Activated T-helper 1 cell treated with anti-CD3 and anti-CD28 coated beads, Interleukin-12 subunit alpha, Interleukin-12 subunit beta, Interleukin-2, Interleukin-4 antibody, amounts not matched to agents 30 ng/mL and 10 ng/mL and 1 ng/mL, durations not matched to agents 14 hours and 24 hours and 36 hours (primary cell): ENCODE measurements at regions of chr13 and their contacts with region 1.

Region 1: DNA sequence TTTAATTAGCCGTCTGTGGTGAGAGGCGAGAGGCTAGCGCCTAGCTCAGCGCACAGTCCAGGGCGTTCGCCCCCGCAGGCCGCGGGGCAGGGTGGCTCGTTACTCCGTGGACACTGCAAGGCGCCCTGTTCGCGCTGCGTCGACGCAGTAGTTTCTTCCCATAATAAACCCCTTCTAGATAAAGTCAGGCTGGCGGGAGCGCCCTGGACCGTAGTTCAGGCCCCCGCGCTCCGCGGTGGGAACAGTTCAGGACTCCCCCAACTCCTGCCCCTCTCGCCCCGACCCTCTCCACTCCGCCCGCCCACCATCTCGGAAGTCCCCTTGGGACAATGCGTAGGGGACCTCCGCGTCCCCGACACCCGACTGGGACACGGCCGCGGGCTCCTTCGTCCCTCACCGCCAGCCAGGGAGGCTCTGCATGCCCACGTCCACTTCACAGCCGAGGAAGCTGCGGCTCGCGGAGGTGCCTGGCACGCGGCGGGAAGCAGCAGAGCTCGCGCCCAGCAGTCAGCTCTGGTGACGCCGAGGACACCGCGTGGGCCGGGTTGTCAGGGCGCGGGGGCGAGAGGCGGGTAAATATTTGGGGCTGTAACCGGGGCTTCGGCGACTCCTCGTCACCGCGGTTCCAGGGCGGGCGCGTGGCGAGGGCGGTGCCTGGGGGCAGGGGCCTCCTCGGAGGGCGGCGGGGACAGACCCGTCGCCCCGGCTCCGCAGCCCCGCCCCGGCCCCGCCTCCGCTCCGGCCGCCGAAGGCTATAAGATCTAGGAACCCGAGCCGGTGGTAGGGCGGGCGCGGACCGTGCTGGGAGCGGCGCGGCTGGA is at the start of gene RGCC:
- DNase-seq: peak; percentile 87
- H3K4me3 Mint-ChIP-seq: peak within 1 kb of the TSS; percentile 95
- H3K27ac Mint-ChIP-seq: peak within 1 kb of the TSS; percentile 96
- H3K4me1 Mint-ChIP-seq: peaks cover 44% of the 10 kb centered on the region
- H3K27me3 Mint-ChIP-seq: peaks cover 22% of the 10 kb centered on the region
- total RNA-seq, gene RGCC: 135 and 139 TPM in 2 replicates

Region 2: DNA sequence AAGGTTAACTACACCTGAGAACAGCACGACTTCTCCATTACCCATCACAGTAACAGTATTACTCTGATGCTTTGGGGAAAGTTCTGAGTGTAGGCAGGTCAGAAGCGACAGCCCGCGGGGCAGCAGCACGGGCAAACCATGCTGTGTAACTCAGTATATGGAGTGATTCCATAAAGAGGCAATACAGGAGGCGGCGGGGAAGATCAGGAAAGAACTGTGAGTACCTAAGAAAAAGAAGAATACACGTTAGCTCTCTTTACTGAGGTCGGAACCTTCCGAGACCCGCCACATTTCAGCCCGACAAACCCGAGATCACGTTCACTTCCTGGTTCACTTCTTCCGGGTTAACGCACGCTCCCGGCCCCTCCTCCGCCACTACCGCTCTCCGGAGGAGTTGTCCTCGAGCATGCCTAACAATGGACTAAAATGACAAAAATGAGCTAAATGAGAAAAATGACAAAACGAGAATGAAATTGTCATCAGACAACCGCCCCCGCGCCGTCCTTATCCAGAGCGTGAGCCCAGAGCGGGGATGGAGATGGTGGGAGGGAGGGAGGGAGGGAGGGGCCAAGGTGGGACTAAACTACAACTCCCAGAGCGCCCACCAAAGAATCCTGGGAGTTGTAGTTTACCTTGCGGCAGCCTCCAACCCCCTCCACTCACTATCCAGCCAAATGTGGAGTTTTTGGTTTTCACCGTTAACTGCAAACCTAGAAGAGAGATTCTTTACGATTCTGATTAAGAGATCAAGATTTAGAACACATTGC is 193.5 kb before region 1 on chr13 and contains the start of gene MTRF1:
- intact Hi-C with region 1: loop called (anchors 2 kb)
- DNase-seq: peak; percentile 72
- H3K4me3 Mint-ChIP-seq: peak within 1 kb of the TSS; percentile 95
- H3K27ac Mint-ChIP-seq: peak within 1 kb of the TSS; percentile 100
- H3K4me1 Mint-ChIP-seq: peaks cover 12% of the 10 kb centered on the region
- H3K27me3 Mint-ChIP-seq: no peaks in the 10 kb centered on the region
- total RNA-seq, gene MTRF1: 17.5 and 20.2 TPM in 2 replicates

Region 3: DNA sequence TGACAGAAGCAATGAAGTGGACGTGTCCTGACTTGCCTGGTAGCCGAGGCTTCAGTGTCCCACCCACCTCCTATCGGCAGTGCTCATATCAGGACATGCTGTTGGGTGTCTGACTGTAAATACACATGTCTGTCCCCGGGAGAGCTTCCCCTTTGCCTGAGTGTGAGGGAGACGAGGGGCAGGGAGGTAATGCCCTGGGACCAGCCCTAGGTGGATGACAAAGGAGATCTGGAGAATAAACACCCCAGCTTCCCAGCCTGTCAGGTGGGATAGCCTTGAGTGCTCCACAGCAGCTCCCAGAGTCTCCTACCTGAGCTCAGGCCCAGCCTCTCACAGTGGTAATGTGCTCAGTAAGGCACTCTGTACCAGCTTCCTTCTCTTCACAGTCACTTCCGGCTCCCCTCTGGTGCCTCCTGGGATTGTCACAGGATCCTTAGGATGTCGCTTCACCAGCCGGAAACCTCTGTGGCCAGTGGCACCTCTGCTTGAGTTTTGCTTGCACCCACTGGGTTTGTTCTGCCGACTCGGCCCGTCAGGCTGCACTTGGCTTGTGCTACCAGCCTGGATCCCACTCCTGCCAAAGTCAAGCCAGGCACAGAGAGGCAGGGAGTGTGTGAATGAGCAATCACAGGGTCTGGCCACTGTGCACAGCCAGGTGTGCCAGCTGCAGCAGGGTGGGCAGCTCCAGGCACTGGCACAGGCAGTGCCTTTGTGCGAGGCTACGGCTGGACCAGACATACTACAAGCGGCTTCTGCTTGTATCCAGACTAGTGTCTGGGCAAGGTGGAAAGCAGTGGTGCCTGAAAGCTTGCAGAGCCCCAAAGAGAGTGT is 54.1 kb before region 1 on chr13:
- intact Hi-C with region 1: loop called (anchors 2 kb)
- DNase-seq: no peak
- H3K4me3 Mint-ChIP-seq: no peak overlapping the region
- H3K27ac Mint-ChIP-seq: no peak overlapping the region
- H3K4me1 Mint-ChIP-seq: no peaks in the 10 kb centered on the region
- H3K27me3 Mint-ChIP-seq: no peaks in the 10 kb centered on the region

Region 4: GRCh38 chr13:41502673-41503072 is 45.7 kb after region 1 on chr13:
- intact Hi-C with region 1: loop called (anchors 1 kb)
- DNase-seq: no peak
- H3K4me3 Mint-ChIP-seq: no peak overlapping the region
- H3K27ac Mint-ChIP-seq: no peak overlapping the region
- H3K4me1 Mint-ChIP-seq: peaks cover 58% of the 10 kb centered on the region
- H3K27me3 Mint-ChIP-seq: peaks cover 2% of the 10 kb centered on the region

Region 5: GRCh38 chr13:41652727-41653361 is 195.9 kb after region 1 on chr13:
- intact Hi-C with region 1: loop called (anchors 1 kb)
- DNase-seq: no peak
- H3K4me3 Mint-ChIP-seq: no peak overlapping the region
- H3K27ac Mint-ChIP-seq: no peak overlapping the region
- H3K4me1 Mint-ChIP-seq: peaks cover 13% of the 10 kb centered on the region
- H3K27me3 Mint-ChIP-seq: no peaks in the 10 kb centered on the region

Region 6: GRCh38 chr13:42110410-42111155 is 653.6 kb after region 1 on chr13:
- intact Hi-C with region 1: loop called (anchors 5 kb)
- DNase-seq: peak; percentile 17
- H3K4me3 Mint-ChIP-seq: no peak overlapping the region
- H3K27ac Mint-ChIP-seq: no peak overlapping the region
- H3K4me1 Mint-ChIP-seq: peaks cover 18% of the 10 kb centered on the region
- H3K27me3 Mint-ChIP-seq: no peaks in the 10 kb centered on the region